ENCODE measurements at regions of chr16 and their contacts with region 1.

Region 1: DNA sequence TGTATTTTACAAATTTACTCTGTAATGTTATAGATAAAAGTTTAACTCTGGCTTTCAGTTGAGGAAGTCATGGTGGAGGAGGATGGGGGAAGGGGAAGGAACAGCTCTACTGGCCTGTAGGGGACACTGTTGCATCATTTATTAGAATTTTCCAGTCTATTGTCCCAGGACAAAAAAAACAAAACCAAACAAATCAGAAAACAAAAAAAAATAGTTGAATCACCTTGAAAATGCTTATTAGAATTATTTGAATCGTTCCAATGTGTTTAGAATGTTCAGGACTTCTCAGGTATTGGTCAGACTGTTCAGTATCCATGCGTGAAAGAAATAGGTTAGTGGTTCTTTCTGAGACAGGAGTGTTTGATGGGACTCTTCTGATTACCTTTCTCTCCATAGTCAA is 242.0 kb downstream of the FTO start:
- DNase-seq: peak; percentile 57
- ATAC-seq: peak; percentile 81
- H3K4me3 ChIP-seq: no peak overlapping the region
- H3K27ac ChIP-seq: no peak overlapping the region
- H3K4me1 ChIP-seq: peaks cover 39% of the 10 kb centered on the region
- H3K27me3 ChIP-seq: no peaks in the 10 kb centered on the region
- CTCF ChIP-seq: peak; percentile 86
- EP300 ChIP-seq: peak in 1 of 2 experiments; percentile 14; a peak in 1 of 4 replicates
- POLR2A ChIP-seq: no peak
- RAD21 ChIP-seq: peak; percentile 86

Region 2: DNA sequence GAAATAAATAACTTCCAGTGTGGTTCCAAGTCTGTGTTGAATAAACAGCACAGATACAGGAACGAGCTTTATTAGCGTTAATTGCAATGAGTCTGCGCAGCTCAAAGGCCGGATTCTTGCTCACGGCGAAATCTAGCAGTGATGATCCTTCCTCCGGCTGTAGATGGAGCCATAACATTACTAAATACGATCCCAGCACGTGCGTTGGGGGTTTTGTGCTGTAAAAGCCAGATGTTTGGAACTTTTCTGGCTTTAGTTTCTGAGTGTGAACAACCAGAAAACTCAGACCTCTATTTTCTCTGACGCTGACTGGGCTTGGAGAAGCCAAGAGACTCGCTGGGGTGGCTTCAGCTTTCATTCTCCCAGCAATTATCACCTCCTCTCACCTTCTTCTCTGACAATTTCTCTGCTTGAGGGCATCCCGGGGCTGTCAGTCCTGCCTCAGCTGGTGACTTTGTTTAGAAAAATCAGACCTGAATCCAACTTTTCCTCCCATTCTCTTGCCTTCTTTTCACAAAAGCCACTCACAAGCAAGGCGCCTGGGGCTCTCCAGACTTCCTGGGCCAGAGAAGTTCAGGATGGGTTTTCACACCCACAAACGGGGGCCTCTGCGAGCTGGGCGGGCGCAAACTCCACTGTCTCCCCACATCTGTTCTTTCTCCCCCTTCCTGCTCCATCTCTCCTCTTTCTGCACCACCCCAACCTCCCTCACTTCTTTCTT is 395.9 kb before region 1 on chr16:
- CTCF ChIA-PET with region 1: interaction called, 3 read pairs
- POLR2A ChIA-PET with region 1: no interaction called
- in situ Hi-C with region 1: no loop called
- intact Hi-C with region 1: loop called (anchors 5 kb)
- DNase-seq: peak; percentile 69
- ATAC-seq: peak; percentile 83
- H3K4me3 ChIP-seq: no peak overlapping the region
- H3K27ac ChIP-seq: no peak overlapping the region
- H3K4me1 ChIP-seq: peaks cover 26% of the 10 kb centered on the region
- H3K27me3 ChIP-seq: peaks cover 0 to 25% of the 10 kb centered on the region in 2 experiments
- CTCF ChIP-seq: peak; percentile 95
- EP300 ChIP-seq: no peak
- POLR2A ChIP-seq: no peak
- RAD21 ChIP-seq: peak; percentile 87

Region 3: GRCh38 chr16:53933407-53933806 is 12.6 kb before region 1 on chr16:
- CTCF ChIA-PET with region 1: no interaction called
- POLR2A ChIA-PET with region 1: no interaction called
- in situ Hi-C with region 1: no loop called
- intact Hi-C with region 1: no loop called
- DNase-seq: no peak
- ATAC-seq: no peak
- H3K4me3 ChIP-seq: no peak overlapping the region
- H3K27ac ChIP-seq: no peak overlapping the region
- H3K4me1 ChIP-seq: no peaks in the 10 kb centered on the region
- H3K27me3 ChIP-seq: no peaks in the 10 kb centered on the region
- CTCF ChIP-seq: no peak
- EP300 ChIP-seq: no peak
- POLR2A ChIP-seq: no peak
- RAD21 ChIP-seq: no peak

Region 4: DNA sequence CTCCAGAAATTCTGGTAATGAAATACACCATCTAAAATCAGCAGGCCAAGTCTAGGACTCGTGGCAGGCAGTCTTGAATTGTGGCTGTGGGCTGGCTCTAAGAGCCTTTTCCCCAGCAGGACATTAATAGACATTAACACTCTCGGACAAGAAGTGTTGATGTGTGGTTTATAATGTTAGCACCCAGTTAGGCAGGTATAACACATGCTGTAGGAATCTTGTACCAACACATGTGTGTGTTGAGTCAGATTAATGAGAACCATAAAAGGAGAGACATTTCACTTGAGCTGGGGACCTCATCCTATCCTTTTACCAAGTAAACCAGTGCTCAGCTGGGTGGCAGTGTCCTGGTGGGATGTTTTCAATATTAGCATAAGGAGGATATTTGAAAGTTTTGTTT is 22.5 kb after region 1 on chr16:
- CTCF ChIA-PET with region 1: no interaction called
- POLR2A ChIA-PET with region 1: no interaction called
- in situ Hi-C with region 1: no loop called
- intact Hi-C with region 1: no loop called
- DNase-seq: no peak
- ATAC-seq: no peak
- H3K4me3 ChIP-seq: no peak overlapping the region
- H3K27ac ChIP-seq: no peak overlapping the region
- H3K4me1 ChIP-seq: no peaks in the 10 kb centered on the region
- H3K27me3 ChIP-seq: no peaks in the 10 kb centered on the region
- CTCF ChIP-seq: no peak
- EP300 ChIP-seq: no peak
- POLR2A ChIP-seq: no peak
- RAD21 ChIP-seq: no peak

Region 5: DNA sequence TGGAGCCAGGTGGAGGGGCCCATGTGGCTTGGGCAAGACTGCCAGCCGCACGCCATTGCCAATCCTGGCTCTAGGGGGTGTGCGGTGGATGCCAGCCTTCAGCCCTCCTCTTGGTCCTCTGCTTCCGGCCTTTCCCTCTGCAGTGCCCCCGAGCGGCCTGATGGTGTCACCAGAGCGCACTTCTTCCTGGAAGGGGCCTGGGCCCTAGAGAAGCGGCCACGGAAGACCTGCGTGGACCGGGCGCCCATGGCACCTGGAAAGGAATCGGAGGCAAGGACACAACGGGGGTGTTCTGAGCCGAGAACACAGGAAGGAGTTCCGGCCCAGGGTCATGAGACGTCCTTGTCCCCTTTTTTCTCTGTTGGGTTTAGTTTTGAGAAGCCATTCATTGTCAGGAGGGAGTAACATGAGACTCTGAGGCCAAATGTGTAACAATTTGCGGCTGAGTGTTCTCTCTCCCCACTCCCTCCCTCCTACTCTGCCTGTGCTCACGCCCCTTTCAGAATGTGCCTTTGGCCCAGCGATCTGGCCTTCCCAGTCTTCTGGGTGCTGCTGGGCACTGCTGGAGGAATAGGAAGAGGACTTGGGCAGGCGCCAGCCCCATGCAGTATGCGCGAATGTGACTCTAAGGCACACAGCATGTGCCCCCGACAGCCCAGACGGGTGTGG is 247.8 kb after region 1 on chr16:
- CTCF ChIA-PET with region 1: no interaction called
- POLR2A ChIA-PET with region 1: no interaction called
- in situ Hi-C with region 1: no loop called
- intact Hi-C with region 1: loop called (anchors 5 kb)
- DNase-seq: peak; percentile 58
- ATAC-seq: peak; percentile 95
- H3K4me3 ChIP-seq: no peak overlapping the region
- H3K27ac ChIP-seq: no peak overlapping the region
- H3K4me1 ChIP-seq: peaks cover 28% of the 10 kb centered on the region
- H3K27me3 ChIP-seq: no peaks in the 10 kb centered on the region
- CTCF ChIP-seq: peak; percentile 97
- EP300 ChIP-seq: no peak
- POLR2A ChIP-seq: no peak
- RAD21 ChIP-seq: peak; percentile 90

Region 6: GRCh38 chr16:54286090-54286993 is 340.3 kb after region 1 on chr16 and contains the start of gene IRX3:
- CTCF ChIA-PET with region 1: no interaction called
- POLR2A ChIA-PET with region 1: no interaction called
- in situ Hi-C with region 1: no loop called
- intact Hi-C with region 1: loop called (anchors 10 kb)
- DNase-seq: peak; percentile 91
- ATAC-seq: peak; percentile 74
- H3K4me3 ChIP-seq: peak within 1 kb of the TSS; percentile 87 to 98 (median 88)
- H3K27ac ChIP-seq: peak within 1 kb of the TSS; percentile 91
- H3K4me1 ChIP-seq: peaks cover 16% of the 10 kb centered on the region
- H3K27me3 ChIP-seq: no peaks in the 10 kb centered on the region
- CTCF ChIP-seq: peak; percentile 26; the same call in 1 of the 2 replicates
- EP300 ChIP-seq: no peak
- POLR2A ChIP-seq: peak; percentile 65 to 67
- RAD21 ChIP-seq: no peak; the same call in 1 of the 2 replicates
- total RNA-seq, gene IRX3: 10.0 and 16.4 TPM in 2 replicates

Region 7: DNA sequence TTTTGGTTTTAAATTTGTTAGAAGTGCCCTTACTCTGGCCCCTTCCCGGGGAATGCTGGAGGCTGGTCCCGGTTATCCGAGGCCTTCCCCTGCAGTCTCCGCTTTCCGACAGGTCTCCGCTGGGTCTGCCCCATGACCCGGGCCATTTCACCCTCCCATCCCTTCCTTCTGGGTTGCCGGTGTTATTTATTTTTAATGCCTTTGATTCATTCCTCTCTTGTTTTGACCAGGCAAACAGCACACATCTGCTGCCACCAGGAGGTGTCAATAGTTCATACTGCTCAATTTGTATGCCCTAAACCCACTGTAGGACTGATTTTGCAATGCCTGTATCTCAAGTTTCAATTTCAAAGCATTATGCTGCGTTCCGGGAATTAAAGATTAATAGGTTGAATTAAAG is 871.5 kb after region 1 on chr16:
- CTCF ChIA-PET with region 1: interaction called, 3 read pairs
- POLR2A ChIA-PET with region 1: no interaction called
- in situ Hi-C with region 1: no loop called
- intact Hi-C with region 1: loop called (anchors 10 kb)
- DNase-seq: peak; percentile 6
- ATAC-seq: peak; percentile 60
- H3K4me3 ChIP-seq: no peak overlapping the region
- H3K27ac ChIP-seq: no peak overlapping the region
- H3K4me1 ChIP-seq: no peaks in the 10 kb centered on the region
- H3K27me3 ChIP-seq: no peaks in the 10 kb centered on the region; a peak in 2 of 5 replicates
- CTCF ChIP-seq: peak; percentile 25; the same call in 1 of the 2 replicates
- EP300 ChIP-seq: no peak
- POLR2A ChIP-seq: no peak
- RAD21 ChIP-seq: no peak

Region 8: DNA sequence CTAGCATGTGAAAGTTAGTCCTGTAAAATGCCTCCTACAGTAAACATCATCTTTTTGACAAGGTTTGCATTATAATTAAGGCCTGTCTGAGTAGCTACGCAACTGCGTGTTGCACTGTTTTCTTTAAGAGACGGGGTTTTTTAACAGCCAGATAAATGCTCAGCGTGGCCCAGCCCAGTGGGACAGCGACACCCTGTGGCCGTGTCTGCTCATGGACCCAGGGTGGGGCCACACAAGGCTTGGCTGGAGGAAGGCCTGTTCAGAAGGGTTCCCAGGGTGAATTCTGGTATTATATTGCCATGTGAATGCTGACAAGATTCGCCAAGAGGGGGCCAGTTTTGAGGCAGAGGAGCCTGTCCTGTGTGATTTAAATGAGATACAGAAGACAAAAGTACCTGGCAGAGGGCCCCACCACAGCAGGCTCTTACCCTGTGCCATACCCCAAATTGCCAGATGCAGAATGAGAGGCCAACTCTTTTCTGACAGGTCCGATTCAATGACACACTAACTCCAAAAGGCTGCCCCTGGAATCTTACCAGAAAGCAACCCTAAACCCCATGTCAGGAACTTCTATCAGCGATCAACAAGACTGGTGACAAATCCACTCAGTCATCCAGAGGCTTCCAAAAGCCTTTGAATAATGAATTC is 1312.1 kb after region 1 on chr16:
- CTCF ChIA-PET with region 1: interaction called, 13 read pairs
- POLR2A ChIA-PET with region 1: no interaction called
- in situ Hi-C with region 1: loop called (anchors 25 kb)
- intact Hi-C with region 1: loop called (anchors 1 kb)
- DNase-seq: peak; percentile 41
- ATAC-seq: peak; percentile 97
- H3K4me3 ChIP-seq: no peak overlapping the region
- H3K27ac ChIP-seq: no peak overlapping the region
- H3K4me1 ChIP-seq: no peaks in the 10 kb centered on the region
- H3K27me3 ChIP-seq: no peaks in the 10 kb centered on the region; a peak in 2 of 5 replicates
- CTCF ChIP-seq: peak; percentile 78
- EP300 ChIP-seq: no peak
- POLR2A ChIP-seq: no peak
- RAD21 ChIP-seq: peak; percentile 84

Measured in HepG2 (cell line).